ENCODE measurements at regions of chr14 and their contacts with region 1.

Region 1: DNA sequence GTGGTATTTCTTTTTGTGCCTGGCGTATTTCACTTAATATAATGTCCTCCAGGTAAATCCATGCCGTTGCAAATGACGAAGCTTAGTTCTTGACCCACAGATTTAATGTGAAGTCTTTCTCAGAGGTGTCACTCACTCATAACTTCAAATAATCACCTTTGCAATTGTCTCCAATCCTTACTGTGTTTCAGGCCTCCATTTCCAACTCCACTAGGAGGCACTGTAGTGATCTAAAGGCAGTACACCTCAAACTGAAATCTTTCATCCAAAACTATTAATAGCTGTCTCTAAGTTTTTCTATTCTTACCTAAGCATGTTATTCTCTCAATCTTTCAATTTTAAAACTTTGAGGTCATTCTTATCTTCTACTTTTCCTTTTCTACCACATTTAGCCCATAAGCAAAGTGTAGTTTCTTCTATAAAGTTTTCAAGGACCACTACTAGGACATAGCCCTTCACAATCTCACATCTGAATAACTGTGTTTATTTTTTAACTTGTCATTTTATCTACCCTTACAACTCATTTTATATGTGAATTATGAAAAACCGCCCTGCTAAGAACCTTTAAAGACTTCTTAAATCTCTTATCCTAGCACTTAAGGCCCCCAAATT is 25.5 kb upstream of the FBXO34 start:
- DNase-seq: no peak
- H3K4me3 Mint-ChIP-seq: no peak overlapping the region
- H3K27ac Mint-ChIP-seq: no peak overlapping the region
- H3K4me1 Mint-ChIP-seq: no peaks in the 10 kb centered on the region
- H3K27me3 Mint-ChIP-seq: peaks cover 40% of the 10 kb centered on the region

Region 2: DNA sequence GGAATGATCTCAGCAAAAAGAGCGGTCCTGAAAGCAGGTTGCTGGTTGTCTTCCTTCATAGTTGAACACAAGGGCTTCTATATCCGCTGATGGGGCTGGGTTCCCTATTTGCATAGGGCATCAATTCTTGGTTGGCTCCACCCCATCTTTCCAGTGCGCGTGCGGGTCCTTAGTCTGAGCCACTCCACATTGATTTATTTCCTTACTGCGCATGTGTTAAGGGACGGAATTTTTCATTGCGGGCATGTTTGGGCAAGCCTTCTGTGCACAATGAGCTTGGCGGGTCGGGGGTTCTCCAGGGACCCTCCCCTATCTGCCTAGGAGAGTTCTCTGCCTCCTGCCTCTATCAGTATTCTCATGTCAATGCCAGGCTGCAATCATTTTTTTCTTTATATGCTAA is 33.1 kb before region 1 on chr14:
- intact Hi-C with region 1: loop called (anchors 5 kb)
- DNase-seq: no peak
- H3K4me3 Mint-ChIP-seq: no peak overlapping the region
- H3K27ac Mint-ChIP-seq: no peak overlapping the region
- H3K4me1 Mint-ChIP-seq: no peaks in the 10 kb centered on the region
- H3K27me3 Mint-ChIP-seq: peaks cover 9% of the 10 kb centered on the region

Region 3: DNA sequence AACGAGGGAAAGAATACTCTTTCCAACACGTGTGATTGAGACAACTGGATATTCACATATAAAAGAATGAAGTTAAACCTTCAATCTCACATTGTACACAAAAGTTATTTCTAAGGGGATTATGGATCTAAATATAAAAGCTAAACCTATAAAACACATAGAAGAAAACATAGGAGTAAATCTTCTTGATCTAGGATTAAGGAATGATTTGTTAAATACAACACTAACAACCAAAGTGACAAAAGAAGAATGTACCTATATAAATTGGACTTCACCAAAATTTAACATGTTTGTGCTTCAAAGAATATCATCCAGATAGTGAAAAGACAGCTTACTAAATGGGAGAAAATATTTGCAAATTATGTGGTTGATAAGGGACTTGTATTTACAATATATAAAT is 17.5 kb before region 1 on chr14:
- intact Hi-C with region 1: no loop called
- DNase-seq: no peak
- H3K4me3 Mint-ChIP-seq: no peak overlapping the region
- H3K27ac Mint-ChIP-seq: no peak overlapping the region
- H3K4me1 Mint-ChIP-seq: no peaks in the 10 kb centered on the region
- H3K27me3 Mint-ChIP-seq: peaks cover 9% of the 10 kb centered on the region

Region 4: GRCh38 chr14:55532645-55533344 is 287.0 kb after region 1 on chr14:
- intact Hi-C with region 1: no loop called
- DNase-seq: no peak
- H3K4me3 Mint-ChIP-seq: no peak overlapping the region
- H3K27ac Mint-ChIP-seq: no peak overlapping the region
- H3K4me1 Mint-ChIP-seq: no peaks in the 10 kb centered on the region
- H3K27me3 Mint-ChIP-seq: peaks cover 1% of the 10 kb centered on the region

Measured in activated T-helper 1 cell treated with anti-CD3 and anti-CD28 coated beads, Interleukin-12 subunit alpha, Interleukin-12 subunit beta, Interleukin-2, Interleukin-4 antibody, amounts not matched to agents 30 ng/mL and 10 ng/mL and 1 ng/mL, durations not matched to agents 14 hours and 24 hours and 36 hours (primary cell).